ENCODE measurements at regions of chr4 and their contacts with region 1.

Region 1: GRCh38 chr4:53929955-53930798 is 134.2 kb downstream of the CHIC2 start:
- DNase-seq: peak; percentile 68
- ATAC-seq: peak; percentile 70
- H3K4me3 Mint-ChIP-seq: no peak overlapping the region
- H3K27ac Mint-ChIP-seq: no peak overlapping the region
- H3K4me1 Mint-ChIP-seq: no peaks in the 10 kb centered on the region
- H3K27me3 Mint-ChIP-seq: no peaks in the 10 kb centered on the region

Region 2: GRCh38 chr4:53908661-53909078 is 21.5 kb before region 1 on chr4:
- CTCF ChIA-PET with region 1: interaction called, 18 read pairs
- POLR2A ChIA-PET with region 1: no interaction called
- DNase-seq: peak; percentile 39
- ATAC-seq: peak; percentile 68
- H3K4me3 Mint-ChIP-seq: no peak overlapping the region
- H3K27ac Mint-ChIP-seq: no peak overlapping the region
- H3K4me1 Mint-ChIP-seq: peaks cover 13% of the 10 kb centered on the region
- H3K27me3 Mint-ChIP-seq: peaks cover 42% of the 10 kb centered on the region

Region 3: DNA sequence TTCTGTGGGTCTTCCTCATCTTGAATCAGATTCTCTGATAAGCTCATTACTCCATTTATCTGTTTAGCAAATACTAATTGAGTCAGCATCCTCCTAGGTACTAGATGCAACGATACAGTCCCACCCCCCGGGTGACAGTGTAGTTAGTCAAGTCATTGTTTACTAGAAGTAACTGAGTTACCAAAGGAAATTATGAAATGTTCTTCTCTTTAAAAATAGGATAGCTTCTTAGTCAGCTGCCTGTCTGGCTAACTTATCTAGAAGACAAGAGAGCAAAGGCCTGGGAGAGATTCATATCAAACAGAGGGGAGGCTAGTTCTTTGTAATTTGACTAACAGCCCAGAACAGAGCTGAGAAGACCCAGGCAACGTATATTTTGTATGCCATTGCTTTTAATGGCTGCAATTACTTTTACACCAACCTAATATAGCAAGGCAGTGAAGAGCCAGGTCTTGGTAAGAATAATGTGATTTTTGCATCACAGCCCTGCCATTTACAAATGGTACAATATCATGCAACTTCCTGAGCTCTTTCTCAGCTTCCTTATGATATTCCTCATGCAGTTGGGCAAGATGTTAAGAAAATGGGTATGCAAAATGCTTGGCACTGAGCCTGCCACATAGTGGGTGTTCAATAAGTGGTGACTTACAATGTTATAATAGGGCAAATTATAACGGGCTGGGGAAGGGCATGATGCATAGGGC is 15.7 kb before region 1 on chr4:
- CTCF ChIA-PET with region 1: interaction called, 18 read pairs
- POLR2A ChIA-PET with region 1: no interaction called
- DNase-seq: no peak
- ATAC-seq: no peak
- H3K4me3 Mint-ChIP-seq: no peak overlapping the region
- H3K27ac Mint-ChIP-seq: no peak overlapping the region
- H3K4me1 Mint-ChIP-seq: no peaks in the 10 kb centered on the region
- H3K27me3 Mint-ChIP-seq: peaks cover 31% of the 10 kb centered on the region

Region 4: DNA sequence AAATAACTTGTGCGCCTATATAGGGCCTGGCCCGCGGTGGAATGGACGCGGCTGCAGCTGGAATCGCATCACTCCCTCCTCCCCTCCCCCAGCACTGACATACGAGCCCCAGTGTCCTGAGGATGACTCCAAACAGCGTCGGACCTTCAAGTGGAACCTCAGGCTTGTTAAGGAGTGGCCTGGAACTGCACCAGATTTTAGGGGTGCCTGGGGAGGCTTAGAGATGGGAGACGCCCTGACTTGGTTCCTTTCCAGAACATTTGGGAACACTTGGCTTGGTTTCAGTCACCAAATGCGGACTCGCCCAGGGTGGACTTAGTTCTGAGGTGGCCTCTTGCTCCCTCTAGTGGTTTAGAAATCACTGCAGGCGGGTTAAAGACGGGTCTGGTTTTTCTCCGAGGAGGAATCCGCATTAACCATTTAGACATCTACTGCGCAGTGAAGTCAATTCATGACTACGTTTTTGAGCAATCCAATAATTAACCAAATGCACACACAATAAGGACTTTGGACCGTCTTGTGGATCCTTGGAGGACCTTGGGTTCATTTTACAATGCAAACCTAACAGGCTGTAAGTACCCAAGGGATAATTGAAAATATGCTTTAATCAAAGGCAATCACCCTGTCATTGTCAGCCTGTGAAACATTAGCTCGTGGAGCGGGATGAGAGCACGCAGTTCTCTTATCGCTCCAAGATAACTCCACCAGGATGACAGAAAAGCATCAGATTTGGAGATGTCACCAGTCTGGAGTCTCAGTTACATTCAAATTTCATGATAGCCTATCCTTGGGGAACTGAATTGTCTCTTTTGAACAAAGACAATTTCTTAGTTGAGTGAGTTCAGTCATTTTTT is 287.7 kb after region 1 on chr4:
- CTCF ChIA-PET with region 1: interaction called, 80 read pairs
- POLR2A ChIA-PET with region 1: interaction called, 4 read pairs
- DNase-seq: peak; percentile 68
- ATAC-seq: peak; percentile 76
- H3K4me3 Mint-ChIP-seq: no peak overlapping the region
- H3K27ac Mint-ChIP-seq: no peak overlapping the region
- H3K4me1 Mint-ChIP-seq: peaks cover 4% of the 10 kb centered on the region
- H3K27me3 Mint-ChIP-seq: peaks cover 11% of the 10 kb centered on the region